HEK293 (cell line): ENCODE measurements at regions of chr4 and their contacts with region 1.

Region 1: DNA sequence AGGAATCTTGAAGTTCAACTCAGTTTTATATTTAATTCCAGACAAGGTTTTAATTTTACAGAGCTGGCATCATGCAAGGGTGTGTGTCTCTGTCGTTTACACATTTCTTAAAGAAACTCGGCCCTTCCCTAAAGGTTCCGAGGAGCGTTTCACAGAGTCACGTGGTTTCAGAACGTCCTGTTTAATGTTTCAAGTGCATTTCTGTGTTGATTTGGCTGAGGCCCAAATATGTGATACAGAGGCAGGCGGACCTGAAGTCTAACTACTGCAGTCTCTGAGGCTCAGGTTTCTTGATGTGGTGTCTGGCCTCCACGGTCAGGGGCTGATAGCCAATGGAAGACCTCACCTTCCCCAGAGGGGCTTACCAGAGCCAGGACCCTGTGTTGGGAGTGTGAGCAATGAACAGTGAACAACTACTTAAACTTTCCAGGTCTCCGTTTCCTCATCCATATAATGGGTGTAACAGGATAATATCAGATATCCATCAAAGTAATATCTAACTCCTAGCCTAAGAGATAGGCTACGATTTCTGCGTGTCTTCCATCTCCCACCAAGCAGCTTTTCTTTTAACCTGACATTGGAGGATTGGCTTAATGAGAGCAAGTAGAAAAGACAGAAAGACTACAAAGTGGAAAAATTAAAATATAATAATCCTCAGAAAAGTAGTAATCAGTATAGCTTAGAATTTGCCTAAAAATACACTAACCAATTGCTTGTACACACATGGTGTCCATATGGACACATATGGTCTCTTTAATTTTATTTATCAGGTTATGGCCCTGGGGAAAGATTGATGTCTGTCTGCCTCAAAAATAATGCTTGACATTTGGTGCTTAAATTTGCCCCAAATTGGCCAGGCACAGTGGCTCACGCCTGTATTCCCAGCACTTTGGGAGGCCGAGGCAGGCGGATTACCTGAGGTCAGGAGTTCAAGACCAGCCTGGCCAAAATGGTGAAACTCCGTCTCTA is 50.0 kb upstream of the TRIM2 start:
- H3K4me3 ChIP-seq: peak overlapping the region; percentile 50
- H3K27ac ChIP-seq: peak overlapping the region; percentile 82
- H3K4me1 ChIP-seq: peaks cover 12% of the 10 kb centered on the region
- CTCF ChIP-seq: no peak

Region 2: GRCh38 chr4:153142700-153143438 is 11.4 kb before region 1 on chr4:
- CTCF ChIA-PET with region 1: interaction called, 13 read pairs
- POLR2A ChIA-PET with region 1: interaction called, 3 read pairs
- H3K4me3 ChIP-seq: no peak overlapping the region
- H3K27ac ChIP-seq: peak overlapping the region; percentile 58; the same call in 1 of the 2 replicates
- H3K4me1 ChIP-seq: peaks cover 12% of the 10 kb centered on the region
- CTCF ChIP-seq: 0 out of 2 replicates have a peak, but pooled peaks have one; percentile 16